SK-N-SH (cell line): ENCODE measurements at regions of chr1 and their contacts with region 1.

Region 1: DNA sequence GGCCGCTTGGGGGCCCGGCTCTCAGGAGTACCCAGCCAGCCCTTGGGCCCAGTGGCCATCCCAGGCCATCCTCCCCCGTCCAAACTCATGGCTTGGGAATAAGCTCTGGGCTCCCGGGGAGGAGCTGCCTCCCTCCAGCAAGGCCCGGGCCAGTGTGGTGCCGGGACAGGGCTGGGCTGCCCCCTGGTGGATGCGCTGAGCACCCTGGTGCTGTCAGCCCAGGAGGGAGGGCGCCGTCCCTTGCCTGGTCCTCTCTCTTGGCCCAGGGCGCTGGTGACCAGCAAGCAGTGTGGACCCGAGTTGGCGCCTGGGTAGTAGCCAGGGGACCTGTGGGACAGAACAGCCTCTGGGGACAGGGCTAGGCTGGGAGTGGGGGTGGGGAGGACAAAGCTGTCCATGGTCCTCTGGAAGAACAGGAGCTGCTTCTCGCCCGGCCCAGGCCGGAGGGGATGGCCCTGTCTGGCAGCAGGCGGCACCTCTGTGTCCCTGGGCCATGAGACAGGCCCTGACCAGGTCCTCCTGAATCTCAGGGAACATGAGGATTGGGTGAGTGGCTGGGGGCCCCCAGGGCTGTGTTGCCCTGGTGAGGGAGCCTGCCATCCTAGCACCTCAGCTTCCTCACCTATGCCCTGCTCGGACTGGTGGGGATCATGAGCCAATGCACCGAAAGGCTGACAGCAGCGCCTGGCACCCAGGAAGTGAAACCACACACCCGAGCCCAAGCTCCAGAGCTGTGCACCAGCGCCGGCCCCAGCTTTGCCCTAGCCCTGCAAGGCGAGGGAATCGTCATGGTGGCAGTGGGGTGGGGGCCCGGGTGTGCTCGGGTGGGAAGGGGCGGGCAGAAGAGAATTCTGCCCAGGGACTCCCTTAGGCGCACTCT is 9.4 kb downstream of the MORN1 start:
- DNase-seq: peak; percentile 98
- H3K4me3 ChIP-seq: no peak overlapping the region; a peak in 1 of 4 replicates
- H3K27ac ChIP-seq: peak overlapping the region in 1 of 2 experiments; percentile 28; a peak in 1 of 4 replicates
- H3K4me1 ChIP-seq: peaks cover 0 to 6% of the 10 kb centered on the region in 2 experiments; a peak in 1 of 4 replicates
- H3K27me3 ChIP-seq: no peaks in the 10 kb centered on the region
- CTCF ChIP-seq: peak; percentile 76
- EP300 ChIP-seq: no peak
- RAD21 ChIP-seq: peak; percentile 87

Region 2: DNA sequence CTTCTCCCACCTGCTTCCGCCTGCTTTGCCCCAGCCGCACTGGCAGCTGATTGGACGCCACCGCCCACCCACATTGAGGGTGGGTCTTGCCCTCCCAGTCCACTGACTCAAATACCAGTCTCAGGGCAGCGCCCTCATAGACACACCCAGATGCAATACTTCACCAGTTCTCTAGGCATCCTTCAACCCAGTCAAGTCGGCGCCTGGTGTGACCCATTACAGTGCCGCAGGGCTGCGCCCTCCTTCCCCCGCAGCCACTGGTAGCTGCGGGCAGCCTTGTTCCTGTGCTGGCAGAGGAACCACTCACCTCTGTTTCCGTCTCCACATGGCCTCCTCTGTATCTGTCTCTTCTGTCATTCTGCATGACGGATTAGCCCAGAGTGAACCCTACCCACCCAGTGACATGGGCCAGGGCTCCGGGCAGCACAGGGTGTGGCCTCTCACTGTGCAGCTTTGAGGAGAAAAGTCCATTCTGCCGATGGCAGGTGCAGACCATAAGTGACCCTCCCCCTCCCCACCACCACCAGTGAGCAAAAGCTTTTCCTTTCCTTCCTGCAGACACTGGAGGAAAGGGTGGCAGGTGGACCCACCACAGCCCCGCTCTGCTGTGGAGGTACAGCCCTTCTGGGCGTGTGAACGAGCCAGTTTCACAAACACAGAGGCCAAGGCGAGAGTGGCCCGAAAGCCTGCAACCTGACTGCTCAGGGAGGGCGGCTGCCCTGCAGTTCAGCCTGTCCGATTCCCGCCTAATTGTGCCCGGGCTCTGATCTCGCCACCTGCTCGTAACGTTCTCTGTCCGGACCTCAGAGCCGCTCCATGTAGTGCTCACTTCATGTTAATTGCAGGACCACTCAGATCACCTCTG is 244.5 kb before region 1 on chr1:
- CTCF ChIA-PET with region 1: interaction called, 10 read pairs
- POLR2A ChIA-PET with region 1: no interaction called
- DNase-seq: no peak
- H3K4me3 ChIP-seq: no peak overlapping the region
- H3K27ac ChIP-seq: no peak overlapping the region
- H3K4me1 ChIP-seq: peaks cover 0 to 28% of the 10 kb centered on the region in 2 experiments; a peak in 2 of 4 replicates
- H3K27me3 ChIP-seq: no peaks in the 10 kb centered on the region
- CTCF ChIP-seq: no peak
- EP300 ChIP-seq: no peak
- RAD21 ChIP-seq: no peak

Region 3: GRCh38 chr1:2189459-2190425 is 192.2 kb before region 1 on chr1:
- CTCF ChIA-PET with region 1: interaction called, 292 read pairs
- POLR2A ChIA-PET with region 1: interaction called, 35 read pairs
- DNase-seq: peak; percentile 94
- H3K4me3 ChIP-seq: peak overlapping the region; percentile 40 to 58
- H3K27ac ChIP-seq: peak overlapping the region; percentile 66 to 93
- H3K4me1 ChIP-seq: peaks cover 0 to 38% of the 10 kb centered on the region in 2 experiments; a peak in 1 of 4 replicates
- H3K27me3 ChIP-seq: no peaks in the 10 kb centered on the region
- CTCF ChIP-seq: no peak
- EP300 ChIP-seq: peak in 1 of 2 experiments; percentile 57; a peak in 2 of 4 replicates
- RAD21 ChIP-seq: no peak

Region 4: DNA sequence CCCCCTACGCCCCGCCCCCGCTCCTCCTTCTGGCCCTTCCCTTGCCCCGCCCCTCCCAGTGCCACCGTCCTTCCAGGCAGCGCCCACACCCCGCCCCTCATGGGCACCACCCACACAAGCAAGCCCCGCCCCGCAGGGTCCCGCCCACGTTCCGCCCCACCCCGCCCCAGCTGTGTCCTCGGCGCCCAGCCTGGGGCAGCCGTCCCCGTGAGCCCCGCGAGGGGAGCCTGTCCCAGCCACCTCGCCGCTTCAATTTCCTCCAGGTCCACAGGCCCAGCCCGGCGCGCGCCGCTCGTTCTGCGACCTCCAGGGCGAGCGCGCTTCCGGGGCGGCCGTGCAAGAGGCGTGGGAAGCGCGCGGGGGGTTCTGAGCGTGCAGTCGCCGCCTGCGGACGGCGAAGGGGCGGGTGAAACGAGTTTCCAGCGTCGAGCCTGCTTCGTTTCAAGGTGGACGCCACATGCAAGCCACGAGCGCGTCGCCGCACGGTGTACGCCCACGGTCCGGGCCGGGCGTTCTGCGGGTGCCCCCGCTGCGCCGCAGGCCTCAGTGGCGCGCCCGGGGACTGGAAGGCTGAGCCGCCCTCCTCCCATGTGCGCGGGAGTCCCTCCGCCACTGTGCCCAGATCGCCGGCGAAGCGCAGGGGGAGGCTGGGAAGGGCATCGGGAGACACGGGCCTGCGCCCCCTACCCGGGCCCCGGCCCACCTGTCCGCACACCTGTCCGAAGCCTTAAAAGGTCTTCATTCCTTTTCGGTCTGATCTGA is 176.6 kb before region 1 on chr1:
- CTCF ChIA-PET with region 1: interaction called, 292 read pairs
- POLR2A ChIA-PET with region 1: no interaction called
- DNase-seq: no peak
- H3K4me3 ChIP-seq: peak overlapping the region; percentile 47 to 48; a peak in 2 of 4 replicates
- H3K27ac ChIP-seq: peak overlapping the region; percentile 36 to 69; a peak in 1 of 4 replicates
- H3K4me1 ChIP-seq: peaks cover 9 to 31% of the 10 kb centered on the region in 2 experiments; a peak in 2 of 4 replicates
- H3K27me3 ChIP-seq: no peaks in the 10 kb centered on the region
- CTCF ChIP-seq: no peak
- EP300 ChIP-seq: no peak
- RAD21 ChIP-seq: no peak

Region 5: DNA sequence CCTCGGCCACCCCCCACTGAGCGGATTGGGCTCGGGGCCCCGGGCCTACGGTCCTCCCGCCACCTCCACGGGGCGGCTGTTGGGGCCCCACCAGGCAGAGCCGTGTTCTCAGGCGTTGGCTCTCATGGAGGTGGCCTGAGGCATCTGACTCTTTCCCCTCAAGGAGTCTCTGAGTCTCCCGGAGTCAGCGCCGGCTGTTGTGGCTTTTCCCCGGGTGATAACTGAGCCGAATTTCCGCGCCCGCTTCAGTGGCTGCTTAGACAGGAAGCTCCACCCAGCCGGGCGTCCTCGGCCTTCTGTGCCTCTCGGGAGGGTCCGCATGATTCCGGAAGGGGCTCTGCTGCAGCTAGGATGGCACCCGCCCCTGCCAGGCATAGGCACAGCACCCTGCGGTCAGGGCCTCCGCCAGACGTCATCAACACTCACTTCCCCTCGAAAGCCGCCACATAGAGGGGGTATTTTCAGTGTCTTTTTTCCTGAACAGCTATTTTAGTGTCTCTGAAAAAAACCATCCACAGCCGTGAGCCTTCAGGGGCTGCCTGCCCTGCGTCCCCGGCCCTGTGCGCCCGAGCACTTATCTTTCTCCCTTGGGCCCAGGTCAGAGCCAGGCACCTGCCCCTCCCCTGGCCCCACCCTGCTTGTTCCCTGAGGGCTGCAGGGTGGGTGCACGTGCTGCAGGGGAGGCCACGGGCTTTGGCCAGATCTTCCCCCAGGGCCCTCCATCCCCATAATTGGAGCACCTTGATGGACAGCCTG is 81.0 kb before region 1 on chr1:
- CTCF ChIA-PET with region 1: interaction called, 10 read pairs
- POLR2A ChIA-PET with region 1: no interaction called
- DNase-seq: no peak
- H3K4me3 ChIP-seq: no peak overlapping the region
- H3K27ac ChIP-seq: peak overlapping the region in 1 of 2 experiments; percentile 83; a peak in 1 of 4 replicates
- H3K4me1 ChIP-seq: peaks cover 0 to 46% of the 10 kb centered on the region in 2 experiments; a peak in 1 of 4 replicates
- H3K27me3 ChIP-seq: no peaks in the 10 kb centered on the region
- CTCF ChIP-seq: no peak
- EP300 ChIP-seq: no peak
- RAD21 ChIP-seq: no peak

Region 6: GRCh38 chr1:2345223-2346080 is 36.5 kb before region 1 on chr1:
- CTCF ChIA-PET with region 1: interaction called, 12 read pairs
- POLR2A ChIA-PET with region 1: no interaction called
- DNase-seq: no peak
- H3K4me3 ChIP-seq: no peak overlapping the region
- H3K27ac ChIP-seq: no peak overlapping the region; a peak in 1 of 4 replicates
- H3K4me1 ChIP-seq: peaks cover 0 to 20% of the 10 kb centered on the region in 2 experiments; a peak in 1 of 4 replicates
- H3K27me3 ChIP-seq: no peaks in the 10 kb centered on the region
- CTCF ChIP-seq: no peak
- EP300 ChIP-seq: no peak
- RAD21 ChIP-seq: no peak

Region 7: GRCh38 chr1:2406451-2407041 is 24.6 kb after region 1 on chr1:
- CTCF ChIA-PET with region 1: interaction called, 12 read pairs
- POLR2A ChIA-PET with region 1: no interaction called
- DNase-seq: no peak
- H3K4me3 ChIP-seq: no peak overlapping the region
- H3K27ac ChIP-seq: no peak overlapping the region; a peak in 1 of 4 replicates
- H3K4me1 ChIP-seq: peaks cover 0 to 5% of the 10 kb centered on the region in 2 experiments; a peak in 1 of 4 replicates
- H3K27me3 ChIP-seq: no peaks in the 10 kb centered on the region
- CTCF ChIP-seq: 0 out of 2 replicates have a peak, but pooled peaks have one; percentile 10
- EP300 ChIP-seq: no peak
- RAD21 ChIP-seq: no peak